GM13977 (cell line): ENCODE measurements at regions of chr3 and their contacts with region 1.

Region 1: DNA sequence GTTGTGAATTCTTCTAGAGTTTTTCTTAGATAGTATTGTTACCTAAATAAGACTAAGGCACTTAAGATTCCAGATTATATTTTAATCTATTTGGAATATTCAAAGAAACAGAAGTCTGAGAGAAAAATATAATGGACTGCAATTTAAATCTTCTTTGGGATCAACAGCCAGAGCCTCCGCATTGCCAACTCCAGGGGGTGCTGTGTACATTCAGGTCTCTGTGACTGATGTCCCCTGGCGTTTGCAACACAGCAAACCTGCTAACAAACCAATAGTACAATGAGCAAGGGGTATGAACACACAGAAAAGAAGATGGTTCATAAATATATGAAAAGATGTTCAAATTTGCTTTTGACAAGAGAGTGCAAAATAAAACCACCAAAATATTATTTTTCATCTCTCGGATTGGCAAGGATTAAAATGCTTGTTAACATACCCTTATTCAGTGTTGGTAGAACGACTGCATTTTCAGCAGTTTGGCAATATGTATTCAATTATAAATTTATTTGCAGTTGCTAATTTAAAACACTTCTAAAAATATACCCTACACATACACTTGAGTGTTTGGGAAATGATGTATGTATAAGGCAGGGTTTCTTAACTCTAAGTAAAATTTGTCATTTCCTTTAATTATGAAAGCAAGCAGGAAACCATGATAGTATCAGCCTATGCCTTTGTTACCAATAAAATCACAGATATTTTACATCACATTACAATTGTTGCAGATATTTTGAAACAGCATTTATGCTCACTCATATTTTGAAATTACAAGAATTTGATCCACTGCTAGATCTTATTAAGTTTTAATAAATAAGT is 16.1 kb upstream of the TM4SF1 start:
- DNase-seq: peak; percentile 57
- CTCF ChIP-seq: peak; percentile 81

Region 2: DNA sequence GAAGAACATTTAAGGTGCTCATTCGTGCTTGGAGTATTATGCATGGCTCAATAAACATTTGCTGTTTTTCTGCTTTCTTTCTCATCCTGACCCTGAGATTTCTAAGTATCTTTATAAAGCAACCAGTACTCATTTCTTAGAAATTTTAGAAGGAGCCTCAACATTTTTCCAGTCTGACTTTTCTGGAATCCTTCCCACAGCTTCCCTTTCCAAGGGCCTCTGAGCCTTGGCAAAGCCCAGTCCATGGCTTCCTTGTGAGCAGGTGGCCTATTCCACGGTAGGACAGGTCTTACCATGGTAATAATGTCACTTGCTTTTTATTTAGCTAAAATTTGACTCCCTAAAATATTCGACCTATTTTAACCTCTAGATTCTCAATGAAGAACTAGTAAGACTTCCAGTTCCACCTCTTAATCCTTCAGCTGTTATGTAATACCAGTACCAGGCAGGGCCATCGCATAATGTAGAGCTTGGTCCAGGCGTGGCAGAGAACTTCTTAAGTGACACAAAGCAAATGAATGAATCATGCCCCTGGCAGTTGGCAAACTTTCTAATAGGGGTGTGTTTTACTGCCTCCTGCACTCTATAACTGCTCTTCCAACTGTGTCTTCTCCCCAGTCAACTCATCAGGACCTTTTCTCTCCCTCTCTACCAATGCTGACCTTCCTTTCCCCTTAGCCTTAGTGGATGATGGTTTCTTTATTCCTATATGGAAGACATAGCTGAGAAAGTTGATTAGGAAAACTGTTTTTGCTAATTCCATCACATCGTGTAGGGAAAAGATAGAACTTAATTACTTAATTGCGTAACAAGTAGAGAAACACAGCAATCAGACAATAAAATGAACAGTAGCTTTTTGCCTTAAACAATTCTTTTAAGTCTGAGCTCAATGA is 80.0 kb after region 1 on chr3:
- in situ Hi-C with region 1: loop called (anchors 10 kb)
- DNase-seq: no peak
- CTCF ChIP-seq: no peak

Region 3: GRCh38 chr3:149670742-149671492 is 277.4 kb after region 1 on chr3:
- in situ Hi-C with region 1: no loop called
- DNase-seq: no peak
- CTCF ChIP-seq: no peak